ENCODE measurements at regions of chr7 and their contacts with region 1.

Region 1: GRCh38 chr7:55537458-55537990 is 34.8 kb downstream of the VOPP1 start:
- DNase-seq: no peak
- H3K4me3 Mint-ChIP-seq: no peak overlapping the region
- H3K27ac Mint-ChIP-seq: no peak overlapping the region
- H3K4me1 Mint-ChIP-seq: peaks cover 48% of the 10 kb centered on the region
- H3K27me3 Mint-ChIP-seq: no peaks in the 10 kb centered on the region
- CTCF ChIP-seq: no peak

Region 2: GRCh38 chr7:55280031-55280454 is 257.5 kb before region 1 on chr7:
- CTCF ChIA-PET with region 1: no interaction called
- intact Hi-C with region 1: no loop called
- DNase-seq: peak; percentile 84
- H3K4me3 Mint-ChIP-seq: no peak overlapping the region
- H3K27ac Mint-ChIP-seq: no peak overlapping the region
- H3K4me1 Mint-ChIP-seq: no peaks in the 10 kb centered on the region
- H3K27me3 Mint-ChIP-seq: peaks cover 64% of the 10 kb centered on the region
- CTCF ChIP-seq: peak; percentile 89

Region 3: GRCh38 chr7:55651057-55651456 is 113.5 kb after region 1 on chr7:
- CTCF ChIA-PET with region 1: no interaction called
- intact Hi-C with region 1: no loop called
- DNase-seq: no peak
- H3K4me3 Mint-ChIP-seq: no peak overlapping the region
- H3K27ac Mint-ChIP-seq: no peak overlapping the region
- H3K4me1 Mint-ChIP-seq: no peaks in the 10 kb centered on the region
- H3K27me3 Mint-ChIP-seq: peaks cover 13% of the 10 kb centered on the region
- CTCF ChIP-seq: no peak

Region 4: GRCh38 chr7:55928006-55928767 is 390.7 kb after region 1 on chr7:
- CTCF ChIA-PET with region 1: interaction called, 11 read pairs
- intact Hi-C with region 1: no loop called
- DNase-seq: no peak
- H3K4me3 Mint-ChIP-seq: no peak overlapping the region
- H3K27ac Mint-ChIP-seq: no peak overlapping the region
- H3K4me1 Mint-ChIP-seq: no peaks in the 10 kb centered on the region
- H3K27me3 Mint-ChIP-seq: no peaks in the 10 kb centered on the region
- CTCF ChIP-seq: no peak